PC-3 (cell line): ENCODE measurements at regions of chr7 and their contacts with region 1.

Region 1: DNA sequence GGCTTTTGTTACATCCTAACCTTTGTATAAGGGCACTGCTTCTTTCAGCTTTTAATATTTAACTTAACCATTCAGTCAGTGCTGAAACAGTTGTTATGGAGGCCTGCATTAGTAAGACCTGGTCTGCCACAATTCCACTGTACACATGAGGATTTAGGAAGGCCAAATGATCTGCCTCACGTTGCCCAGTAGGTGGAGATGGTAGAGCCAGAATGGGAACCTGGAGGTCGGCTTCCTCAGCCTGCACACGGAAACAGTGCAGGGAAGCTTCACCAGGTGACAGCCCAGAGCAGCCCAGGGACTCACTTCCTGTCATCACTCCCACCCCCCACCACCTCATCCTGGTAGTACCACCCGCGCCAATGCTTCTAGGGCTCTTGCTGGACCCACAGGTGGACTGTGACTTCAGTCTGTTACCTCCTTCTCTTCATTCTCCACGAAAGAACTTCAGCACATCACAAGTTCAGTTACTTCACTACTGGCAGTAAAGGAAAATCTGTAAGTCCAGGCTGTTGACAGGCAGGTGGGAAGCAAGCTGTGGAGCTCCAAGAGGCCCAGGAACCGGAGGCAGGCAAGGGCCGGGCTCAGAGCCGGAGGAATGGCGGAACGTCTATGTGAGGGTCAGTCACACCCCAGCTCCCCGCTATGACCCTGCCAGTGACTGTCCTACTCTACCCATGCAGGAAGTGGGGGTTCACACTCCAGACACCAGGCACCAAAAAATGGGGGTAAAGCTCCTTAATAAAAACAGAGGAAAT is 480.3 kb upstream of the C7orf33 start:
- DNase-seq: peak; percentile 22
- ATAC-seq: peak; percentile 68
- H3K4me3 ChIP-seq: no peak overlapping the region
- H3K27ac ChIP-seq: no peak overlapping the region
- H3K4me1 ChIP-seq: no peaks in the 10 kb centered on the region
- H3K27me3 ChIP-seq: peaks cover 12% of the 10 kb centered on the region
- CTCF ChIP-seq: peak; percentile 34; the same call in 1 of the 2 replicates

Region 2: GRCh38 chr7:148142660-148143248 is 32.5 kb after region 1 on chr7:
- CTCF ChIA-PET with region 1: interaction called, 6 read pairs
- POLR2A ChIA-PET with region 1: no interaction called
- intact Hi-C with region 1: loop called (anchors 2 kb)
- DNase-seq: peak; percentile 72
- ATAC-seq: peak; percentile 89
- H3K4me3 ChIP-seq: no peak overlapping the region
- H3K27ac ChIP-seq: no peak overlapping the region
- H3K4me1 ChIP-seq: no peaks in the 10 kb centered on the region
- H3K27me3 ChIP-seq: peaks cover 8% of the 10 kb centered on the region; the same call in 1 of the 2 replicates
- CTCF ChIP-seq: peak; percentile 78